ENCODE measurements at regions of chr3 and their contacts with region 1.

Region 1: DNA sequence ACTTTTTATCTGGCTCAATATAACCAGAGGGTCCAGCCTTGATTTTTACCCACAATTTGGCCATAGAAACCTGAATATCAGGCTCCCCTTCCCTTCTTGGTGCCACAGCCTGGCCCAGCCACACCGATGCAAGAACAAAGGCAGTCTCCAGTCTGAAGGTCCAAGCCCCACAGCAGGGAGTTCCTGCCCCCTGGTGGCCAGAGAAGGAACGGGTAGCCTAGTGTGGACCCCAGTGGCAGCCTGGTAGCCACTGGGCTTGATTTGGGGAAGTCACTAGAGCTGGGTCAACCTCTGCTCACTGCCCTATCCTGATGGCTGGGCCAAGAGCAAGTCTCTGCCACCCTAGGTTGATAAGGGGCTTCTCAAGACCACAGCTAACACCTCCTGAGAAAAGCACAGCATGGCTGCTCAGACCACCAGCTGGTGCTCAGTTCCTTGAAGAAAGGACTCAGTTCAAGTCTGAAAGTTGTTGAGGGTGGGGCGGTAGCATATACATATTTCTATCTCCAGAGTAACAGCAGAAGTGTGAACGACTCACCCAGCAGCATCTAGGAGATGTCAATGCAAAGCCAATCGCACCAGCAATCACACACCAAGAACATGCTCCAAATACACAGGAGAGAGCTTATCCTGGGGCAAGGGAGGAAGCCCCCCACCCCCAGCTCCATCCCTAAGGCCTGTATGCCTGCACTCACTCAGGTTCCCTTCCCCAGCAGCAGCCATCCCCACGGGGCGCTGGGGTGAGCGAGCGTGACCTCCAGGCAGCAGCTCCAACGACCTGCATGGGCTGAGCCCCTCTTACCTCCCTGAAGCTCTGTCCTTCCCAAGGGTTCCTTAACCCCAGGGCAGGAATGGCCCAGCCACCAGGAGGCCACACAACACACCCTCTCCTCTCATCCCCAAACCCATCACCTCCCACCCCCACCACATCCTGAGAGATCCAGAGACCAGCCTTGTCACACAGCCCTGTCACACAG is 7.6 kb downstream of the PFKFB4 start:
- DNase-seq: peak; percentile 89
- ATAC-seq: peak; percentile 96
- H3K4me3 Mint-ChIP-seq: no peak overlapping the region
- H3K27ac Mint-ChIP-seq: no peak overlapping the region
- H3K4me1 Mint-ChIP-seq: peaks cover 9% of the 10 kb centered on the region
- H3K27me3 Mint-ChIP-seq: no peaks in the 10 kb centered on the region

Region 2: GRCh38 chr3:48232734-48233133 is 316.3 kb before region 1 on chr3:
- CTCF ChIA-PET with region 1: no interaction called
- POLR2A ChIA-PET with region 1: no interaction called
- intact Hi-C with region 1: loop called in 1 of 2 experiments (anchors 2 kb)
- DNase-seq: peak; percentile 81
- ATAC-seq: peak; percentile 98
- H3K4me3 Mint-ChIP-seq: no peak overlapping the region
- H3K27ac Mint-ChIP-seq: no peak overlapping the region
- H3K4me1 Mint-ChIP-seq: peaks cover 6% of the 10 kb centered on the region
- H3K27me3 Mint-ChIP-seq: peaks cover 2% of the 10 kb centered on the region

Region 3: GRCh38 chr3:48273594-48274211 is 275.3 kb before region 1 on chr3:
- CTCF ChIA-PET with region 1: interaction called, 3 read pairs
- POLR2A ChIA-PET with region 1: no interaction called
- intact Hi-C with region 1: loop called (anchors 2 to 10 kb)
- DNase-seq: peak; percentile 68
- ATAC-seq: no peak
- H3K4me3 Mint-ChIP-seq: no peak overlapping the region
- H3K27ac Mint-ChIP-seq: no peak overlapping the region
- H3K4me1 Mint-ChIP-seq: peaks cover 22% of the 10 kb centered on the region
- H3K27me3 Mint-ChIP-seq: no peaks in the 10 kb centered on the region

Region 4: GRCh38 chr3:48465531-48466378 is 83.3 kb before region 1 on chr3:
- CTCF ChIA-PET with region 1: interaction called, 8 read pairs
- POLR2A ChIA-PET with region 1: no interaction called
- intact Hi-C with region 1: loop called (anchors 1 to 5 kb)
- DNase-seq: peak; percentile 90
- ATAC-seq: peak; percentile 92
- H3K4me3 Mint-ChIP-seq: peak overlapping the region; percentile 93
- H3K27ac Mint-ChIP-seq: peak overlapping the region; percentile 96
- H3K4me1 Mint-ChIP-seq: peaks cover 46% of the 10 kb centered on the region
- H3K27me3 Mint-ChIP-seq: no peaks in the 10 kb centered on the region